ENCODE measurements at regions of chr13 and their contacts with region 1.

Region 1: GRCh38 chr13:43074824-43075510 is 51.6 kb downstream of the DNAJC15 start:
- DNase-seq: no peak
- H3K4me3 Mint-ChIP-seq: no peak overlapping the region
- H3K27ac Mint-ChIP-seq: no peak overlapping the region
- H3K4me1 Mint-ChIP-seq: peaks cover 53% of the 10 kb centered on the region
- H3K27me3 Mint-ChIP-seq: peaks cover 2% of the 10 kb centered on the region

Region 2: DNA sequence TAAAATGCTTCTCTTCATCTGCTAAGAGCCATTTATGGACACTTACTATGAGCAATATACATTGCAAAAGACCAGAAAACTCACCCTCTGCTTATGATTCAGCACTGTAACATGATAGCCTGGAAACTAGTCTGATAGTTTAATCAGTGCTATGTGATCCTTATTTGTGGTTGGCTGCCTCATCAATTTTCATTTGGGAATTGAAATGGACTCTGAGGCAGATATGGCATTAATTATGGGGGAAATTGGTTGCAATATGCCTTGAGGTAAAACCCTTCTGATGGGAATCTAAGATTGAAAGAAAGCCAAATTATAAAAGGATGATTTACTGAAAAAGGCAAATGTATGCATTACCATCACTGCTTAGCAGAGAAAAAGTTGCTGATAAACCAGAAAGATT is 260.1 kb before region 1 on chr13:
- intact Hi-C with region 1: no loop called
- DNase-seq: no peak
- H3K4me3 Mint-ChIP-seq: no peak overlapping the region
- H3K27ac Mint-ChIP-seq: peak overlapping the region; percentile 13
- H3K4me1 Mint-ChIP-seq: no peaks in the 10 kb centered on the region
- H3K27me3 Mint-ChIP-seq: peaks cover 10% of the 10 kb centered on the region

Region 3: GRCh38 chr13:43061496-43062265 is 13.3 kb before region 1 on chr13:
- intact Hi-C with region 1: loop called (anchors 1 kb)
- DNase-seq: no peak
- H3K4me3 Mint-ChIP-seq: no peak overlapping the region
- H3K27ac Mint-ChIP-seq: peak overlapping the region; percentile 62
- H3K4me1 Mint-ChIP-seq: peaks cover 29% of the 10 kb centered on the region
- H3K27me3 Mint-ChIP-seq: no peaks in the 10 kb centered on the region

Region 4: DNA sequence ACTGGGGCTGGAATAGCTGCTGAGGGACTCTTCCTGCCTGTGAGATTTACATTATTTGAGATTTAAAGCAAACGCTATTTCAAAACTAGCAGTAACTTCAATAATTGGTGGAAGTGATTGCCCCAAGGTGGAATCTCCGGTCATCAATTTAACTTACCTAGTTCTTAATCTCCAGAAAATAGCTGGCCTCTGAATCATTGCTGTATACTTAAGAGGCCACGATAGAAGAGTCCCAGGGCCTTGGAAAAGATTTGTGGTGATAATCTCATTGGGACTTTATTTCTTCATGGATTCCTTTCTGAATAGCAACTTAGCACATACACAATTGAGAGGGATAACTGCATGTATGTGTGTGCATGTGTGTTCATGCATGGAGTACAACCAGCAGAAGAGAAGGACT is 68.6 kb after region 1 on chr13:
- intact Hi-C with region 1: no loop called
- DNase-seq: no peak
- H3K4me3 Mint-ChIP-seq: no peak overlapping the region
- H3K27ac Mint-ChIP-seq: no peak overlapping the region
- H3K4me1 Mint-ChIP-seq: no peaks in the 10 kb centered on the region
- H3K27me3 Mint-ChIP-seq: peaks cover 11% of the 10 kb centered on the region

Measured in activated T-helper 1 cell treated with anti-CD3 and anti-CD28 coated beads, Interleukin-12 subunit alpha, Interleukin-12 subunit beta, Interleukin-2, Interleukin-4 antibody, amounts not matched to agents 30 ng/mL and 10 ng/mL and 1 ng/mL, durations not matched to agents 14 hours and 24 hours and 36 hours (primary cell).